Activated B cell treated with CpG ODN at 0.5 μM for 24 hours (primary cell): ENCODE measurements at regions of chr16 and their contacts with region 1.

Region 1: GRCh38 chr16:68528686-68529379 is 10.3 kb upstream of the ZFP90 start:
- DNase-seq: peak; percentile 81
- ATAC-seq: peak; percentile 82
- H3K4me3 Mint-ChIP-seq: peak overlapping the region; percentile 88
- H3K27ac Mint-ChIP-seq: peak overlapping the region; percentile 63
- H3K4me1 Mint-ChIP-seq: peaks cover 24% of the 10 kb centered on the region
- H3K27me3 Mint-ChIP-seq: no peaks in the 10 kb centered on the region
- CTCF ChIP-seq: no peak

Region 2: GRCh38 chr16:68434624-68435197 is 94.1 kb before region 1 on chr16:
- CTCF ChIA-PET with region 1: no interaction called
- POLR2A ChIA-PET with region 1: no interaction called
- intact Hi-C with region 1: no loop called
- DNase-seq: no peak
- ATAC-seq: no peak
- H3K4me3 Mint-ChIP-seq: no peak overlapping the region
- H3K27ac Mint-ChIP-seq: no peak overlapping the region
- H3K4me1 Mint-ChIP-seq: no peaks in the 10 kb centered on the region
- H3K27me3 Mint-ChIP-seq: peaks cover 12% of the 10 kb centered on the region
- CTCF ChIP-seq: no peak

Region 3: GRCh38 chr16:68538880-68539701 is 10.3 kb after region 1 on chr16 and contains the start of gene ZFP90:
- CTCF ChIA-PET with region 1: interaction called, 4 read pairs
- POLR2A ChIA-PET with region 1: interaction called, 8 read pairs
- intact Hi-C with region 1: loop called (anchors 1 kb)
- DNase-seq: peak; percentile 87
- ATAC-seq: peak; percentile 97
- H3K4me3 Mint-ChIP-seq: peak within 1 kb of the TSS; percentile 93
- H3K27ac Mint-ChIP-seq: peak within 1 kb of the TSS; percentile 93
- H3K4me1 Mint-ChIP-seq: peaks cover 14% of the 10 kb centered on the region
- H3K27me3 Mint-ChIP-seq: no peaks in the 10 kb centered on the region
- CTCF ChIP-seq: no peak
- total RNA-seq, gene ZFP90: 18.8 and 25.1 TPM in 2 replicates

Region 4: GRCh38 chr16:68575082-68575481 is 46.2 kb after region 1 on chr16:
- CTCF ChIA-PET with region 1: no interaction called
- POLR2A ChIA-PET with region 1: no interaction called
- intact Hi-C with region 1: no loop called
- DNase-seq: no peak
- ATAC-seq: no peak
- H3K4me3 Mint-ChIP-seq: no peak overlapping the region
- H3K27ac Mint-ChIP-seq: no peak overlapping the region
- H3K4me1 Mint-ChIP-seq: no peaks in the 10 kb centered on the region
- H3K27me3 Mint-ChIP-seq: no peaks in the 10 kb centered on the region
- CTCF ChIP-seq: no peak

Region 5: GRCh38 chr16:68704232-68704867 is 175.5 kb after region 1 on chr16:
- CTCF ChIA-PET with region 1: interaction called, 4 read pairs
- POLR2A ChIA-PET with region 1: no interaction called
- intact Hi-C with region 1: loop called (anchors 1 kb)
- DNase-seq: peak; percentile 48
- ATAC-seq: peak; percentile 58
- H3K4me3 Mint-ChIP-seq: peak overlapping the region; percentile 36
- H3K27ac Mint-ChIP-seq: no peak overlapping the region
- H3K4me1 Mint-ChIP-seq: peaks cover 5% of the 10 kb centered on the region
- H3K27me3 Mint-ChIP-seq: no peaks in the 10 kb centered on the region
- CTCF ChIP-seq: no peak

Region 6: DNA sequence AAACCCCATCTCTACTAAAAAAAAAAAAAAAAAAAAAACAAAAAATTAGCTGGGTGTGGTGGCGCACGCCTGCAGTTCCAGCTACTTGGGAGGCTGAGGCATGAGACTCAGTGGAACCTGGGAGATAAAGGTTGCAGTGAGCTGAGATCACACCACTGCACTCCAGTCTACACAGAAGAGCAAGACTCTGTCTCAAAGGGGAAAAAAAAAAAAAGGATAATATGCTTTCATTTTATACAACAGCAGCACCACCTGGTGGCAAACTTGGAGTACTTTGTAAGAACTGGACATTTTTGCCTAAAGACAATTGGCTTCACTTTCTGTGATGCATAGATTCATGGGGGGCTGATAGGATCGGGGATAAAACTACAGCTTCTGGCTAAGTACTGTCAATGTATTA is 595.1 kb after region 1 on chr16:
- CTCF ChIA-PET with region 1: interaction called, 51 read pairs
- POLR2A ChIA-PET with region 1: no interaction called
- intact Hi-C with region 1: loop called (anchors 1 kb)
- DNase-seq: no peak
- ATAC-seq: peak; percentile 69
- H3K4me3 Mint-ChIP-seq: no peak overlapping the region
- H3K27ac Mint-ChIP-seq: no peak overlapping the region
- H3K4me1 Mint-ChIP-seq: peaks cover 13% of the 10 kb centered on the region
- H3K27me3 Mint-ChIP-seq: no peaks in the 10 kb centered on the region
- CTCF ChIP-seq: peak; percentile 26

Region 7: DNA sequence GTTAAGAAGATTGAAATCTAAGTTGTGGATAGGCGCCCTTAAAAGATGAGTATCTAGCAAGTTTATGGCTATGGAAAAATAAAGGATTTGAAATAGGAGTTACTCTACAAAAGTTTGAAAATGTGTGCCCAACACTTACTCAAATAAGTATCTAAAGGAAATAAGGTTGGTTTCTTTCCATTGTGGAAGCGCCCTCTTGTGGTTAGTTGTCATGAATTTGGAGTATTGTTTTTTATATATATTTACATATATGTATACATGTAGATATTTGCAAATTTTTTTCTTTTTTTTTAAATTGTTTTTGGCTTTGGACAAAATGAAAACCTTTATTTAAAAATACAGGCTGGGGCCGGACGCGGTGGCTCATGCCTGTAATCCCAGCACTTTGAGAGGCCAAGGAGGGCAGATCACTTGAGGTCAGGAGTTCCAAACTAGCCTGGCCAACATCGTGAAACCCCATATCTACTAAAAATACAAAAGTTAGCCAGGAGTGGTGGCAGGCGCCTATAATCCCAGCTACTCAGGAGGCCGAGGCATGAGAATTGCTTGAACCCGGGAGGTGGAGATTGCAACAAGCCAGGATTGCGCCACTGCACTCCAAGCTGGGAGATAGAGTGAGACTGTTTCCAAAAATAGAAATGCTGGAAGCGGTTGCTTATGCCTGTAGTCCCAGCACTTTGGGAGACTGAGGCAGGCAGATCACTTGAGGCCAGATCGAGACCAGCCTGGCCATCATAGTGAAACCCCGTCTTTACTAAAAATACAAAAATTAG is 758.3 kb after region 1 on chr16:
- CTCF ChIA-PET with region 1: interaction called, 5 read pairs
- POLR2A ChIA-PET with region 1: no interaction called
- intact Hi-C with region 1: loop called (anchors 1 kb)
- DNase-seq: no peak
- ATAC-seq: no peak
- H3K4me3 Mint-ChIP-seq: no peak overlapping the region
- H3K27ac Mint-ChIP-seq: no peak overlapping the region
- H3K4me1 Mint-ChIP-seq: no peaks in the 10 kb centered on the region
- H3K27me3 Mint-ChIP-seq: no peaks in the 10 kb centered on the region
- CTCF ChIP-seq: peak; percentile 18